Naive thymus-derived CD4-positive, alpha-beta T cell (primary cell): ENCODE measurements at regions of chr11 and their contacts with region 1.

Region 1: GRCh38 chr11:72848846-72849466 is 34.7 kb downstream of the ATG16L2 start:
- DNase-seq: peak in 7 of 9 donors; percentile 28 to 61 (median 47)
- ATAC-seq: peak; percentile 81
- H3K4me3 ChIP-seq: no peak overlapping the region
- H3K4me3 Mint-ChIP-seq: no peak overlapping the region
- H3K27ac ChIP-seq: no peak overlapping the region
- H3K27ac Mint-ChIP-seq: peak overlapping the region in 3 of 9 donors; percentile 3 to 81 (median 4)
- H3K4me1 ChIP-seq: no peaks in the 10 kb centered on the region
- H3K4me1 Mint-ChIP-seq: peaks cover 4 to 28% (median 12%) of the 10 kb centered on the region in 7 donors
- H3K27me3 ChIP-seq: no peaks in the 10 kb centered on the region
- H3K27me3 Mint-ChIP-seq: no peaks in the 10 kb centered on the region

Region 2: GRCh38 chr11:72561856-72562255 is 287.1 kb before region 1 on chr11:
- CTCF ChIA-PET with region 1: no interaction called
- POLR2A ChIA-PET with region 1: no interaction called
- intact Hi-C with region 1: no loop called
- DNase-seq: no peak
- ATAC-seq: no peak
- H3K4me3 ChIP-seq: no peak overlapping the region
- H3K4me3 Mint-ChIP-seq: no peak overlapping the region
- H3K27ac ChIP-seq: no peak overlapping the region
- H3K27ac Mint-ChIP-seq: no peak overlapping the region
- H3K4me1 ChIP-seq: no peaks in the 10 kb centered on the region
- H3K4me1 Mint-ChIP-seq: no peaks in the 10 kb centered on the region
- H3K27me3 ChIP-seq: no peaks in the 10 kb centered on the region
- H3K27me3 Mint-ChIP-seq: peaks cover 0 to 19% (median 0%) of the 10 kb centered on the region in 5 donors

Region 3: GRCh38 chr11:72683782-72684200 is 165.2 kb before region 1 on chr11:
- CTCF ChIA-PET with region 1: interaction called, 3 read pairs
- POLR2A ChIA-PET with region 1: no interaction called
- intact Hi-C with region 1: loop called in 1 of 2 experiments (anchors 2 kb)
- DNase-seq: peak; percentile 36 to 75 (median 56)
- ATAC-seq: peak; percentile 77
- H3K4me3 ChIP-seq: no peak overlapping the region
- H3K4me3 Mint-ChIP-seq: no peak overlapping the region
- H3K27ac ChIP-seq: no peak overlapping the region
- H3K27ac Mint-ChIP-seq: peak overlapping the region in 3 of 9 donors; percentile 59 to 74 (median 61)
- H3K4me1 ChIP-seq: no peaks in the 10 kb centered on the region
- H3K4me1 Mint-ChIP-seq: peaks cover 7 to 46% (median 16%) of the 10 kb centered on the region in 7 donors
- H3K27me3 ChIP-seq: no peaks in the 10 kb centered on the region
- H3K27me3 Mint-ChIP-seq: peaks cover 0 to 11% (median 0%) of the 10 kb centered on the region in 5 donors